PC-9 (cell line): ENCODE measurements at regions of chr12 and their contacts with region 1.

Region 1: DNA sequence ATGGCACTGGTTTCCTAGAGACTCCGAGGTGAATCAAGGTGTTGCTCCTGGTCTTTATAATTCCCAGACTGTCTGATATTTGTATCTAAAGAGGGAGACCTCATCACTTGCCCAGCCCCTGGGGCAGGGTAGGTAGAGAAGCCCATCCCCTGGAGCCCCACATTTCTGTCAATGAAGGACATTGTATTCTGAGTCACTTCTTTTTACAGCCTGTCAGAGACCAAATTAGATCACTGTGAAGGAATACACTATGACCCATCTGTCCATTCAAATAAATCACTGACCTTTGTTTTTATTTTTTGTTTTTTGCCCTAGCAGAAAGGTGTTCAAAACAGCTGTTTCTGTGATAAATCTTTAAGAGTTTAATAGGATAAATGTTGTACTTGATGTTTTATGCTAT is 67.9 kb upstream of the ANO6 start:
- DNase-seq: no peak
- H3K4me3 ChIP-seq: no peak overlapping the region
- H3K27ac ChIP-seq: no peak overlapping the region
- H3K4me1 ChIP-seq: no peaks in the 10 kb centered on the region
- H3K27me3 ChIP-seq: no peaks in the 10 kb centered on the region
- CTCF ChIP-seq: no peak

Region 2: GRCh38 chr12:45093051-45093450 is 55.0 kb before region 1 on chr12:
- CTCF ChIA-PET with region 1: no interaction called
- POLR2A ChIA-PET with region 1: interaction called, 10 read pairs
- intact Hi-C with region 1: no loop called
- DNase-seq: no peak
- H3K4me3 ChIP-seq: no peak overlapping the region
- H3K27ac ChIP-seq: no peak overlapping the region
- H3K4me1 ChIP-seq: no peaks in the 10 kb centered on the region
- H3K27me3 ChIP-seq: no peaks in the 10 kb centered on the region
- CTCF ChIP-seq: no peak